T-cell (primary cell): ENCODE measurements at regions of chr5 and their contacts with region 1.

Region 1: GRCh38 chr5:131968396-131968954 is 23.0 kb upstream of the MEIKIN start:
- DNase-seq: no peak
- ATAC-seq: no peak
- H3K4me3 ChIP-seq: no peak overlapping the region
- H3K4me3 Mint-ChIP-seq: no peak overlapping the region
- H3K27ac ChIP-seq: no peak overlapping the region
- H3K27ac Mint-ChIP-seq: peak overlapping the region in 1 of 2 donors; percentile 49
- H3K4me1 ChIP-seq: peaks cover 0 to 2% of the 10 kb centered on the region in 2 experiments
- H3K4me1 Mint-ChIP-seq: peaks cover 28 to 31% (median 31%) of the 10 kb centered on the region in 3 donors
- H3K27me3 ChIP-seq: no peaks in the 10 kb centered on the region
- H3K27me3 Mint-ChIP-seq: no peaks in the 10 kb centered on the region

Region 2: GRCh38 chr5:131423056-131423455 is 545.4 kb before region 1 on chr5:
- CTCF ChIA-PET with region 1: no interaction called
- POLR2A ChIA-PET with region 1: interaction called in 1 of 2 experiments, 11 read pairs
- DNase-seq: no peak
- ATAC-seq: no peak
- H3K4me3 ChIP-seq: no peak overlapping the region
- H3K4me3 Mint-ChIP-seq: no peak overlapping the region
- H3K27ac ChIP-seq: no peak overlapping the region
- H3K27ac Mint-ChIP-seq: peak overlapping the region; percentile 66 to 76
- H3K4me1 ChIP-seq: no peaks in the 10 kb centered on the region
- H3K4me1 Mint-ChIP-seq: peaks cover 9 to 25% (median 22%) of the 10 kb centered on the region in 3 donors
- H3K27me3 ChIP-seq: no peaks in the 10 kb centered on the region
- H3K27me3 Mint-ChIP-seq: no peaks in the 10 kb centered on the region

Region 3: DNA sequence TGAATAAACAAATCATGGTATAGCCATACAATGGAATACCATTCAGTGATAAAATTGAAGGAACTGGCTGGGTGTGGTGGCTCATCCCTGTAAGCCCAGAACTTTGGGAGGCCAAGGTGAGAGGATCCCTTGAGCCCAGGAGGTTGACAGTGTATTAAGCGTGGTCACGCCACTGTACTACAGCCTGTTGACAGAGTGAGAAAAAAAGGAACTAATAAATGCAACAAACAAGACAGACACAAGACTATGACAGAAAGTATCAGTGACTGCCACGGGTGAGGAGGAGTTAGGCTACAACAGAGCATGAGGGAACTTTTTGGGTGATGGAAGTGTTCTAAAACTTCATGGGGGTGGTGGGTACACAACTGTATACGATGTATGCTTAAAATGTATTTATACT is 173.9 kb before region 1 on chr5:
- CTCF ChIA-PET with region 1: no interaction called
- POLR2A ChIA-PET with region 1: no interaction called
- DNase-seq: no peak
- ATAC-seq: no peak
- H3K4me3 ChIP-seq: no peak overlapping the region
- H3K4me3 Mint-ChIP-seq: peak overlapping the region; percentile 23 to 95 (median 55)
- H3K27ac ChIP-seq: no peak overlapping the region
- H3K27ac Mint-ChIP-seq: no peak overlapping the region
- H3K4me1 ChIP-seq: peaks cover 8 to 10% of the 10 kb centered on the region in 2 experiments
- H3K4me1 Mint-ChIP-seq: peaks cover 61 to 68% (median 62%) of the 10 kb centered on the region in 3 donors
- H3K27me3 ChIP-seq: no peaks in the 10 kb centered on the region
- H3K27me3 Mint-ChIP-seq: no peaks in the 10 kb centered on the region

Region 4: DNA sequence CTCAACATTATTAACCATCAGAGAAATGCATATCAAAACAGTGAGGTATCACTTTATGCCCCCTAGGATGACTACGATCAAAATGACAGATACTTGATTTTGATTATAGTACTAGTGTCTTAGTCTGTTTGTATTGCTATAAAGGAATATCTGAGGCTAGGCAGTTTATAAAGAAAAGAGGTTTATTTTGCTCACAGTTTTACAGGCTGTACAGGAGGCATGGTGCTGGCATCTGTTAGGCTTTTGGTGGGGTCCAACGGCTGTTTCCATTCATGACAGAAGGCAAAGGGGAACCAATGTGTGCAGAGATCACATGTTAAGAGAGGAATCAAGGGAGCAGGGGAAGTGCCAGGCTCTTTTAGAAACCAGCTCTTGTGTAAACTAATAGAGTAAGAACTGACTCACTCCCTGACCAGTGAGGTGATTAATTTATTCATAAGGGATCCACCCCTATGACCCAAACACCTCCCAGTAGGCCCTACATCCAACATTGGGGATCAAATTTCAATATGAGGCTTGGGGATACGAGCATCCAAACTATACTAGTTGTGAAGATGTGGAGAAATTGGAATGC is 1011.0 kb after region 1 on chr5:
- CTCF ChIA-PET with region 1: no interaction called
- POLR2A ChIA-PET with region 1: no interaction called
- DNase-seq: no peak
- ATAC-seq: no peak
- H3K4me3 ChIP-seq: no peak overlapping the region
- H3K4me3 Mint-ChIP-seq: no peak overlapping the region
- H3K27ac ChIP-seq: no peak overlapping the region
- H3K27ac Mint-ChIP-seq: no peak overlapping the region
- H3K4me1 ChIP-seq: no peaks in the 10 kb centered on the region
- H3K4me1 Mint-ChIP-seq: no peaks in the 10 kb centered on the region
- H3K27me3 ChIP-seq: peaks cover 0 to 2% of the 10 kb centered on the region in 2 experiments
- H3K27me3 Mint-ChIP-seq: no peaks in the 10 kb centered on the region